Colonic mucosa (tissue), 4 donors: ENCODE measurements at regions of chr9 and their contacts with region 1.

Region 1: GRCh38 chr9:20884985-20885593 is 146.4 kb downstream of the HACD4 start:
- DNase-seq: peak; percentile 59
- H3K4me3 ChIP-seq: no peak overlapping the region
- H3K27ac ChIP-seq: no peak overlapping the region
- H3K4me1 ChIP-seq: no peaks in the 10 kb centered on the region
- H3K27me3 ChIP-seq: no peaks in the 10 kb centered on the region
- CTCF ChIP-seq: peak; percentile 69

Region 2: DNA sequence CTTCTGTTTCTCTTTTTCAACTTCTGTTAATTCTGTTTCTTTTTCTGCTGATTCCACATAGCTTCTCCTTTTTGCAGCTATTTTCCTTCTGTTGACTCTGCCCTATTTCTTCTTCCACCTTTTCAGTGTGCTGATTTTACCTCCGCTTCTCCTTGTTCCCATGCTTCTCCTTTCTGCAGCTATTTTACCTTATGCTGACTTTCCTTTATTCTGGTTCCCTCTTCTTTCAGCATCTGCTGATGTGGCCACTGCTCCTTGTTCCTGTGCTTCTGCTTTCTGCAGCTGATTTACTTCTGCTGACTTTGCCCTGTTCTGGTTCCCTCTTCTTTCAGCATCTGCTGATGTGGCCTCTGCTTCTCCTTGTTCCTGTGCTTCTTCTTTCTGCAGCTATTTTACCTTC is 87.6 kb after region 1 on chr9:
- intact Hi-C with region 1: no loop called
- DNase-seq: no peak
- H3K4me3 ChIP-seq: no peak overlapping the region
- H3K27ac ChIP-seq: no peak overlapping the region
- H3K4me1 ChIP-seq: no peaks in the 10 kb centered on the region
- H3K27me3 ChIP-seq: no peaks in the 10 kb centered on the region
- CTCF ChIP-seq: no peak

Region 3: GRCh38 chr9:21102305-21102704 is 217.2 kb after region 1 on chr9:
- intact Hi-C with region 1: loop called (anchors 10 kb)
- DNase-seq: no peak
- H3K4me3 ChIP-seq: no peak overlapping the region
- H3K27ac ChIP-seq: no peak overlapping the region
- H3K4me1 ChIP-seq: no peaks in the 10 kb centered on the region
- H3K27me3 ChIP-seq: no peaks in the 10 kb centered on the region
- CTCF ChIP-seq: no peak

Region 4: DNA sequence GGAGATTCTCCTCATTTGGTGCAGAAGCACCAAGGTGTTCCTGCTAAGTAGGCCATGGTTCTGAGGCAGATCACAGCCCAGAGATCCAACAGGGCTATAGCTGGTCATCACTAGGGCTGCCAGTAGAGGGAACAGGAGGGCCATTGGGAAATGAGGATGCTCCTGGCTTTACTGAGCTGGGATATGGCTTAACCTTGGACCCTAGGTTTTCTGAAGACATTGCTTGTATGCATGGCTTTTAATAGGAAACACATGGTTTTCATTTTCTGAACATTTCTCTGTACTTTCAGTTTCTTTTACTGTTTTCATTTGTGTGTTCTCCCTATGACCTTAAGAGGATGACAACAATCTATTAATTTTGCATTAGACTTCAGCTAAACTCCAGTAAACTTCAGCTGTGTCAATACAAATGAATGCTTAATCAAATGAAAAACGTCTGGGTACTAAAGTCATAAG is 256.4 kb after region 1 on chr9 and contains the start of gene IFNW1:
- intact Hi-C with region 1: no loop called
- DNase-seq: no peak
- H3K4me3 ChIP-seq: no peak within 1 kb of the TSS
- H3K27ac ChIP-seq: no peak within 1 kb of the TSS
- H3K4me1 ChIP-seq: no peaks in the 10 kb centered on the region
- H3K27me3 ChIP-seq: no peaks in the 10 kb centered on the region
- CTCF ChIP-seq: no peak
- total RNA-seq, gene IFNW1: not detected